Left lung (tissue), 14 donors: ENCODE measurements at regions of chr1 and their contacts with region 1.

Region 1: GRCh38 chr1:156383023-156383422 is 14.0 kb downstream of the RHBG start:
- DNase-seq: peak in 3 of 4 donors; percentile 39 to 63 (median 52)
- ATAC-seq: peak; percentile 88
- H3K4me3 ChIP-seq: no peak overlapping the region
- H3K27ac ChIP-seq: no peak overlapping the region
- H3K4me1 ChIP-seq: peaks cover 0 to 3% of the 10 kb centered on the region in 2 donors
- H3K27me3 ChIP-seq: peaks cover 7 to 24% of the 10 kb centered on the region in 2 donors
- CTCF ChIP-seq: peak; percentile 68 to 74

Region 2: GRCh38 chr1:155911156-155912055 is 471.6 kb before region 1 on chr1 and contains the start of gene RIT1:
- intact Hi-C with region 1: no loop called
- DNase-seq: peak; percentile 80 to 97 (median 92)
- ATAC-seq: peak; percentile 96
- H3K4me3 ChIP-seq: peak within 1 kb of the TSS; percentile 64 to 78
- H3K27ac ChIP-seq: peak within 1 kb of the TSS; percentile 88 to 92
- H3K4me1 ChIP-seq: peaks cover 4 to 30% of the 10 kb centered on the region in 2 donors
- H3K27me3 ChIP-seq: no peaks in the 10 kb centered on the region
- CTCF ChIP-seq: no peak
- polyA plus RNA-seq, gene RIT1: 45.2 to 55.9 (median 49.1) TPM

Region 3: GRCh38 chr1:156445789-156446263 is 62.8 kb after region 1 on chr1:
- intact Hi-C with region 1: loop called (anchors 2 to 10 kb)
- DNase-seq: peak; percentile 67 to 93 (median 80)
- ATAC-seq: peak; percentile 99
- H3K4me3 ChIP-seq: no peak overlapping the region
- H3K27ac ChIP-seq: no peak overlapping the region
- H3K4me1 ChIP-seq: peaks cover 0 to 6% of the 10 kb centered on the region in 2 donors
- H3K27me3 ChIP-seq: peaks cover 30 to 85% of the 10 kb centered on the region in 2 donors
- CTCF ChIP-seq: peak; percentile 95 to 99

Region 4: DNA sequence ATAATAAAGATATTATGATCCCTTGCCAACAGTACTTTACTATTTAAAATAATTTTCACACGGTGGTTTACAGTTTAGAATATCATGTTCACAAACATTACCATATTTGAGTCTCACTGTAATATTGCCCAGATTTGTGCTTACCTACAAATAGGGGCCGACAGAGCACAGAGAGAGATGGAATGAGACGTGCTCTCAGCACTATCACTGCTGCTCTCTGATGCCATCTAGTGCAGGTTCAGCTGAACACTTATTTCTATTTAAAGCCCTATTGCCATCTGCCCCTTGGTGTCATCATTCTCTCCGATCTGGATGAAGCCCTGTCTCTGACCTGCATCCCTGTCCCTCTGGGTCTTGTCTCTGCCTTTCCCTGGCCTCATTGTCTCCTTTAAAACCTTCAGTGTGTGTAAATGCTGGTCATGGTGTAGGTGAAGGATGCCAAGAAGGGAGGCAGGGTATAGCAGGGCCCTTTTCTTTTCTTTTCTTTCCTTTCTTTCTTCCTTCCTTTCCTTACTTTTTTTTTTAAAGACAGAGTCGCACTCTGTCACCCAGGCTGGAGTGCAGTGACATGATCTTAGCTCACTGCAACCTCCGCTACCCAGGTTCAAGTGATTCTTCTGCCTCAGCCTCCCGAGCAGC is 225.1 kb after region 1 on chr1:
- intact Hi-C with region 1: loop called in 1 of 2 experiments (anchors 5 kb)
- DNase-seq: peak in 2 of 4 donors; percentile 35 to 65
- ATAC-seq: peak; percentile 98
- H3K4me3 ChIP-seq: no peak overlapping the region
- H3K27ac ChIP-seq: no peak overlapping the region
- H3K4me1 ChIP-seq: no peaks in the 10 kb centered on the region
- H3K27me3 ChIP-seq: peaks cover 0 to 37% of the 10 kb centered on the region in 2 donors
- CTCF ChIP-seq: peak; percentile 57 to 61